HEK293 (cell line): ENCODE measurements at regions of chr12 and their contacts with region 1.

Region 1: DNA sequence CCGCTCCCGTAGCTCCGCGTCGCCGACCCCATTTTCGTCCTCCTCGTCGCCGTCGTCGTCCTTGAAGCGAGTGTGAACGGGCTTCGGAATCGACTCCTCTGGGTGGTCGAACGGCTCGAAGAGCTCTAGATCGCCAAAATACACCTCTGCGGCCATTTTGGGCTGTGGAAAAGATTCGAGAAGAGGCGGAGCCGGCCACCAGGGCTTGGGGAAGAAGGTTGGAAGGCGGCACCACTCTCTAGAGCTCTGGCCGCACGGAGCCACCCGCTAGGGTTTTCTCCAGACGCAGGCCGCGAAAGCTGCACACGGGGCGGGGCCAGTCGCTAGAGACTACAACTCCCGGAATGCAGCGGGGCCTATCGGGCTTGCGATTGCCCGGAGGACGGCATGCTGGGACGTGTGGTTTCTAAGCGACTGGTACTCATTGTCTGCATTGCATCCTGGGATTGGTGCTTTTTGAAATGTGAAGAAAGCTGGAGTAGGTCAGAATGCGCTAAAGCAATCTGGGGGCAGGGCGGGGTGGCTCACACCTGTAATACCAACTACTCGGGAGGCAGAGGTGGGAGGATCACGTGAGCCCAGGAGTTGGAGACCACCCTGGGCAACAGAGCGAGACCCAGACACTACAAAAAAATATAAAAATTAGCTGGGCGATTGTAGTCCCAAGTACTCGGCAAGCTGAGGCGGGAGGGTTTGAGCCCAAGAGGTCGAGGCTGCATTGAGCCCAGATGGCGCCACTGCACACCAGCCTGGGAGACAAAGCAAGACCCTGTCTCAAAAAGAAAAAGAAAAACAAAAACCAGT is at the start of gene ZCCHC8:
- H3K4me3 ChIP-seq: peak within 1 kb of the TSS; percentile 85
- H3K27ac ChIP-seq: peak within 1 kb of the TSS; percentile 95
- H3K4me1 ChIP-seq: peaks cover 3% of the 10 kb centered on the region; the same call in 1 of the 2 replicates
- CTCF ChIP-seq: peak; percentile 59

Region 2: DNA sequence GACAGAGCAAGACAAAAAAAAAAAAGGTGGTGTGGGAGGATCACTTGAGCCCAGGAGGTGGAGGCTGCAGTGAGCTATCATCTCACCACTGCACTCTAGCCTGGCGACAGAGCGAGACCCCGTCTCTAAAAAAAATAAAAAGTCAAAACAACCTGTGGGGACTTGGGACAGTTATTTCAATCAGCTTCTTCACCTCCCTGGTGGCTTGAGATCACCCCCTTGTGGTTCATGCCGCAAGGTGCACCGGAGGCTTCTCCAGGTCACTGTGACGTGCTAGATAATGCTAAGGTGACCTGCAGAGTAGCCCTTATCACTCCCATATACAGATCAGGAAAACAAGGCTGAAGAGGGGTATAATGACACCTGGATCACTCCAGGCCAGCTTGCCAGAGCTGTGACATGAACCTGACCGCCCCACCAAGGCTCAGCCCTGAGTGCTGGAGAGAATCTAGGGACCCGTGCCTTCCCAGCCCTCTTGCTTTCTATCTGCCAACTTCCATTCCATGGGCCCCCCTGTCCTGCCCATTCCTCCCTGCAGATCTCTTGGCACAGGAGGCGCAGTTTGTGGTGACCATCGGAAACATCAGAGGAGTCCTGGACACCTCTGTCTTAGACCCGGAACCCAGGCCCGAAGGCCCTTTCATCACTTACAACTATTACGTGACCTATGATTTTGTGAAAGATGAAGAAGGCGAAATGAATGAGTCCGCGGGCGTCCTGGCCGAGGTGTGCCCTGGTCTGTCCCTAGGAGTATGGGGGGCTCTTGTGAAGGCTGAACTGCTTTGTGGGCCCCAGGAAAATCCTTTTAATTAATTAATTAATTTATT is 309.8 kb before region 1 on chr12:
- CTCF ChIA-PET with region 1: no interaction called
- POLR2A ChIA-PET with region 1: interaction called, 11 read pairs
- H3K4me3 ChIP-seq: no peak overlapping the region
- H3K27ac ChIP-seq: no peak overlapping the region
- H3K4me1 ChIP-seq: no peaks in the 10 kb centered on the region
- CTCF ChIP-seq: peak; percentile 62

Region 3: DNA sequence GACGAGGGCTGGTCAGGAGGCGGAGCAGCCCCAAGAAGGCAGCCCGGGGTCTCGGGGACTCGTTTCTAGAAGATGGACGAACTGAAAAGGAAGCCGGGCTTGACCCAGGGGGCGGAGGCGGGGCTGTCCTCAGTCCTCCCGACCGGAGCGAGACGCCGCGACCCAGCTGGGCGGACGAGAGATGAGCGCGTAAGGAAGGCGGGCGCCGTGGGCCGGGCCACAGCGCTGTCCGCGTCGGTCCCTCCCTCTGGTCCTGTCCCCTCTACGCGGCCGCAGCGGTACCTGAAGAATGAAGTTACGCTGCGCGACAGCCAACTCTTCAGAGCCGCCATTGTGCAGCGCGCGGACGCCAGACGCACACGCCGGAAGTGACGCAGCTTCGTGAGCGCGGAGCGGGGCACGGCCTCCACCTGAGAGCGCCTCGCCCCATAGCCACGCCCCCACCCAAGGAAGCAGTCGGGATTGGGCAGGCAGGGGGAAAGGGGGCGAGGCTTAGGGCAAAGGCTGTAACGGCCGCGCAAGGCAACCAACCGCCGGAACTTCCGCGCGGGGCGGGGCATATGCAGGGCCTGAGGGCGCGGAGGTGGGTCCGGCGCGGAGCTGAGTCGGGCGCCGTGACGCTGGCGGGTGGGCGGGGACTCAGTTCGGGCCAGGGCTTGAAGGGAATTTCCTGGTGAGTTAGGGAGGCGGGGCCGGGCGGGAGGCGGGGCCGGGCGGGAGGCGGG is 275.0 kb before region 1 on chr12 and contains the start of gene DIABLO:
- CTCF ChIA-PET with region 1: no interaction called
- POLR2A ChIA-PET with region 1: interaction called, 10 read pairs
- H3K4me3 ChIP-seq: peak within 1 kb of the TSS; percentile 98
- H3K27ac ChIP-seq: peak within 1 kb of the TSS; percentile 88
- H3K4me1 ChIP-seq: peaks cover 11% of the 10 kb centered on the region
- CTCF ChIP-seq: no peak

Region 4: GRCh38 chr12:122471324-122472226 is 29.3 kb before region 1 on chr12:
- CTCF ChIA-PET with region 1: interaction called, 10 read pairs
- POLR2A ChIA-PET with region 1: interaction called, 4 read pairs
- H3K4me3 ChIP-seq: no peak overlapping the region
- H3K27ac ChIP-seq: no peak overlapping the region; the same call in 1 of the 2 replicates
- H3K4me1 ChIP-seq: 0 out of 2 replicates have a peak, but pooled peaks cover 3% of the 10 kb centered on the region
- CTCF ChIP-seq: no peak

Region 5: GRCh38 chr12:122517877-122518276 is 17.0 kb after region 1 on chr12:
- CTCF ChIA-PET with region 1: no interaction called
- POLR2A ChIA-PET with region 1: interaction called, 12 read pairs
- H3K4me3 ChIP-seq: no peak overlapping the region
- H3K27ac ChIP-seq: no peak overlapping the region
- H3K4me1 ChIP-seq: peaks cover 4% of the 10 kb centered on the region; the same call in 1 of the 2 replicates
- CTCF ChIP-seq: no peak

Region 6: GRCh38 chr12:122526683-122527477 is 26.0 kb after region 1 on chr12 and contains the starts of genes KNTC1 and RSRC2:
- CTCF ChIA-PET with region 1: no interaction called
- POLR2A ChIA-PET with region 1: interaction called, 55 read pairs
- H3K4me3 ChIP-seq: peak within 1 kb of the TSS; percentile 73
- H3K27ac ChIP-seq: peak within 1 kb of the TSS; percentile 98
- H3K4me1 ChIP-seq: peaks cover 17% of the 10 kb centered on the region
- CTCF ChIP-seq: no peak

Region 7: GRCh38 chr12:122681814-122682213 is 180.9 kb after region 1 on chr12:
- CTCF ChIA-PET with region 1: no interaction called
- POLR2A ChIA-PET with region 1: no interaction called
- H3K4me3 ChIP-seq: no peak overlapping the region
- H3K27ac ChIP-seq: no peak overlapping the region
- H3K4me1 ChIP-seq: no peaks in the 10 kb centered on the region; the same call in 1 of the 2 replicates
- CTCF ChIP-seq: no peak